Heart left ventricle (tissue), 16 donors: ENCODE measurements at regions of chr1 and their contacts with region 1.

Region 1: DNA sequence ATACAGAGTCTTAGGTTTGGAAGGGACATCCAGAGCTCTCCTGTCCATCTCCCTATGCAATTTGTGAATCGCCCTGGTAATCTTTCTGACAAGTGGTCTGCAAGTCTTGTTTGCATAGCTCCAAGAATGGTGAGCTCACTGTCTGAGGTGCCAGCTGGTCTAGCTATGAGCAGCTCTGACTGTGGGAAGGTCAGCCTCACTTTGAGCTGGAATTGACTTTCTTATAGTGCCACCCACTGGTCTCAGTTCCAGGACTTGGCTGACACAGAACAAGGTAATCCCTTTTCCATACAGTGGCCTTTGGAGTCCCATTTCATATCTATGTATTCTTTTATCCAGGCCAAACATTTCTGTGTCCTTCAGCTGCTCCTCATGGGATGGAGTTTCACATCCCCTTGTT is 95.6 kb upstream of the C8B start:
- DNase-seq: no peak
- ATAC-seq: peak; percentile 47 to 78 (median 63)
- H3K4me3 ChIP-seq: no peak overlapping the region
- H3K27ac ChIP-seq: no peak overlapping the region
- H3K4me1 ChIP-seq: peaks cover 0 to 10% (median 0%) of the 10 kb centered on the region in 12 donors
- H3K27me3 ChIP-seq: no peaks in the 10 kb centered on the region
- CTCF ChIP-seq: peak in 3 of 12 donors; percentile 6 to 19 (median 11)
- POLR2A ChIP-seq: no peak

Region 2: DNA sequence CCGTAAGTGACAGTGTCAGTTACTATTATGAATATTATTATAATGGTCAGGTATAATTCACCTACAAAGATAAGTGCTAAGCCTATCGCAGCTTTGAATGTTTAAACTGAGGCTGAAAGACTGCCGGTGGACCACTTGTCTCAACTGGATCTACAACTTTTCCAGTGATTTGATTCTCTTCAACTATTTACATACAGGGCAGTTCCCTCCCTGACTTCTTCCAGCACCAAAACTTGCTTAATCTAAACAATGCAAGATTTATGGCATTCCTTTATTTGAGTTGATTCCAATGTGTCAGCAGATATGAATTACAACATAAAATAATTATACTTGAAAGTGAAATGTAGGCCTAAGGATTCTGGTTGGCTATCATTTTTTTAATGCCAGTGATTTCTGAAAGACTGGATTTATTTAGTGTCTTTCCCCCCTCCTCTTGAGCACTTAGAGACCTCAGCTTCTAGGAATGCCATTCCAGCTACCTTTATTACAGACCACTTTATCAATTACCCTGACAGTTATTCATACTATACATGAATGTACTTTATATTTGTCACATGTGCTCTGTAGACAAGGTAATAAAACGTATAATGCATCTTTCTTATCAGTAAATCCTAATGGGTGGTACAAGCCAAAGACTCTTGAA is 57.7 kb after region 1 on chr1:
- intact Hi-C with region 1: loop called in 1 of 10 experiments (anchors 5 kb)
- DNase-seq: no peak
- ATAC-seq: no peak
- H3K4me3 ChIP-seq: no peak overlapping the region
- H3K27ac ChIP-seq: no peak overlapping the region
- H3K4me1 ChIP-seq: peaks cover 0 to 17% (median 0%) of the 10 kb centered on the region in 12 donors
- H3K27me3 ChIP-seq: no peaks in the 10 kb centered on the region
- CTCF ChIP-seq: no peak
- POLR2A ChIP-seq: no peak

Region 3: DNA sequence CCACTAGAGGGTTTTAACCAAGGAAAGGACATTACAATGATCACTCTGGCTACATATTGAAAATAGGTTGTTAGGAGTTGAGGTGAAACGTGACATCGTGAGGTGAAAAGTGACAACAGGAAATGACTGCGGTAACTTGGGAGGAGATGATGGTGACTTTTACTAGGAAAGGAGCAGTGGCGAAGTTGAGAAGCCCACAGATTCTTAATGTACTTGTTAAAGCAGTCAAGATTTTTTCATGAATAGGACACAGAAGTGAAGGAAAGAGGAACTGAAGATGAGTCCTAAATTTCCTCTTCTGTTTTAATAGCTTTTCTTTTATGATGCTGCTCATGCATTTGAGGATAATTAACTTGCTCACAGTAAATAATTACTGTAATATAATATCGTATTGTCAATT is 1425.6 kb after region 1 on chr1:
- intact Hi-C with region 1: no loop called
- DNase-seq: no peak
- ATAC-seq: no peak
- H3K4me3 ChIP-seq: no peak overlapping the region
- H3K27ac ChIP-seq: no peak overlapping the region
- H3K4me1 ChIP-seq: peaks cover 0 to 7% (median 0%) of the 10 kb centered on the region in 12 donors
- H3K27me3 ChIP-seq: no peaks in the 10 kb centered on the region
- CTCF ChIP-seq: no peak
- POLR2A ChIP-seq: no peak